ENCODE measurements at regions of chr7 and their contacts with region 1.

Region 1: DNA sequence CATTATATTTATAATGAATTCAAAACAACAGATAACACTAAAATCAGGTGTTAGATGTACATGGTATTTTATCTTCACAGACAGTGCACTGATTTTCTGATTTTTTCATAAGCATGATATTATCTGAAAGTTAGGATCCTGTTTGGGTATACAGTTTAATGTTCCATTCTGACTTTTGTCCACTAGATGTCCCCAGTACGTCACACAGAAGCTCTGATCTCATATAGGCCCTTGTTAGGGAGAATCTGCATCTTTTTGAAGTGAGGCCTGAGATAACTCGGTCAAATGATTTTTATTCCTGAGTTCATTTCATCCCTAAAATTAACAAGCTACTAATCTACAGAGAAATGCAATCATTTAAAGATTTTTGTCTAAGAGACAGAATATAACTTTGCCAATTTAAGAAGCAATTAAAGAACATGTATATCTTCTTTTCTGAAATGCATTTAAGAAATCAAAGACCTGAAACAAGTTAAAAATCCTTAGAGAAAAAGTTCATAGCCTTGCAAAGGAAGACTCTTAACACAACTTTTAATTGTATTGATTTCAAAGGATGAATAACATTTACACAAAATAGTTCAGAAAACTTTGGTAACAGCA is 72.0 kb upstream of the TES start:
- DNase-seq: no peak
- H3K4me3 Mint-ChIP-seq: no peak overlapping the region
- H3K27ac Mint-ChIP-seq: no peak overlapping the region
- H3K4me1 Mint-ChIP-seq: peaks cover 13% of the 10 kb centered on the region
- H3K27me3 Mint-ChIP-seq: peaks cover 26% of the 10 kb centered on the region

Region 2: GRCh38 chr7:116173051-116174028 is 35.0 kb after region 1 on chr7:
- intact Hi-C with region 1: loop called (anchors 2 kb)
- DNase-seq: no peak
- H3K4me3 Mint-ChIP-seq: no peak overlapping the region
- H3K27ac Mint-ChIP-seq: no peak overlapping the region
- H3K4me1 Mint-ChIP-seq: peaks cover 3% of the 10 kb centered on the region
- H3K27me3 Mint-ChIP-seq: peaks cover 34% of the 10 kb centered on the region

Measured in activated T-helper 2 cell treated with anti-CD3 and anti-CD28 coated beads, Interferon-gamma antibody, Interleukin-2, Interleukin-4, amounts not matched to agents 10 μg/mL and 5 μg/mL and 100 μg/mL, durations not matched to agents 14 hours and 24 hours and 36 hours (primary cell).